Activated T-helper 1 cell treated with anti-CD3 and anti-CD28 coated beads, Interleukin-12 subunit alpha, Interleukin-12 subunit beta, Interleukin-2, Interleukin-4 antibody, amounts not matched to agents 30 ng/mL and 10 ng/mL and 1 ng/mL, durations not matched to agents 14 hours and 24 hours and 36 hours (primary cell): ENCODE measurements at regions of chr7 and their contacts with region 1.

Region 1: GRCh38 chr7:73451780-73452398 is 18.3 kb downstream of the FZD9 start:
- DNase-seq: no peak
- H3K4me3 Mint-ChIP-seq: no peak overlapping the region
- H3K27ac Mint-ChIP-seq: peak overlapping the region; percentile 16
- H3K4me1 Mint-ChIP-seq: peaks cover 21% of the 10 kb centered on the region
- H3K27me3 Mint-ChIP-seq: no peaks in the 10 kb centered on the region

Region 2: GRCh38 chr7:73328696-73329095 is 123.2 kb before region 1 on chr7:
- intact Hi-C with region 1: loop called (anchors 1 kb)
- DNase-seq: no peak
- H3K4me3 Mint-ChIP-seq: no peak overlapping the region
- H3K27ac Mint-ChIP-seq: no peak overlapping the region
- H3K4me1 Mint-ChIP-seq: peaks cover 5% of the 10 kb centered on the region
- H3K27me3 Mint-ChIP-seq: peaks cover 5% of the 10 kb centered on the region

Region 3: DNA sequence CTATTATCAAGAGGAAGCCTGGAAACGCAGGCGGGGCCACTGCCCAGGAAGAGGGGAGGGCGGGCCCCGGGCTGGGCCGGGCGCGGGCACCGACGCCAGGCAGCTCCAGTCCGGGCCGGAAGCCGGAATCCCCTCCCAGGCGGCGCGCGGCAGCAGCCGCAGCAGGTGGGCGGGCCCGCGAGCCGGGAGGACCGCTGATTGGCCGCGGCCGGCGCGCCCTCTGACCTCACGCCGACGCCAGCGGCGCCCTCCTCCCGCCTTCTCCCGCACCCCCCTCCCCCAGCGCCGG is 105.2 kb after region 1 on chr7:
- intact Hi-C with region 1: loop called (anchors 5 kb)
- DNase-seq: peak; percentile 92
- H3K4me3 Mint-ChIP-seq: peak overlapping the region; percentile 94
- H3K27ac Mint-ChIP-seq: peak overlapping the region; percentile 79
- H3K4me1 Mint-ChIP-seq: peaks cover 38% of the 10 kb centered on the region
- H3K27me3 Mint-ChIP-seq: peaks cover 8% of the 10 kb centered on the region

Region 4: GRCh38 chr7:73769992-73770859 is 318.3 kb after region 1 on chr7 and contains the start of gene CLDN3:
- intact Hi-C with region 1: no loop called
- DNase-seq: no peak
- H3K4me3 Mint-ChIP-seq: no peak within 1 kb of the TSS
- H3K27ac Mint-ChIP-seq: no peak within 1 kb of the TSS
- H3K4me1 Mint-ChIP-seq: no peaks in the 10 kb centered on the region
- H3K27me3 Mint-ChIP-seq: peaks cover 25% of the 10 kb centered on the region
- total RNA-seq, gene CLDN3: not detected in 2 replicates